ENCODE measurements at regions of chr17 and their contacts with region 1.

Region 1: GRCh38 chr17:7561028-7561575 is 617 bp upstream of the SENP3 start:
- DNase-seq: peak; percentile 76
- ATAC-seq: peak; percentile 72
- H3K4me3 ChIP-seq: peak overlapping the region; percentile 79
- H3K27ac ChIP-seq: peak overlapping the region; percentile 84
- H3K4me1 ChIP-seq: peaks cover 9% of the 10 kb centered on the region
- H3K27me3 ChIP-seq: no peaks in the 10 kb centered on the region
- CTCF ChIP-seq: peak; percentile 94
- POLR2A ChIP-seq: no peak
- RAD21 ChIP-seq: peak; percentile 85

Region 2: DNA sequence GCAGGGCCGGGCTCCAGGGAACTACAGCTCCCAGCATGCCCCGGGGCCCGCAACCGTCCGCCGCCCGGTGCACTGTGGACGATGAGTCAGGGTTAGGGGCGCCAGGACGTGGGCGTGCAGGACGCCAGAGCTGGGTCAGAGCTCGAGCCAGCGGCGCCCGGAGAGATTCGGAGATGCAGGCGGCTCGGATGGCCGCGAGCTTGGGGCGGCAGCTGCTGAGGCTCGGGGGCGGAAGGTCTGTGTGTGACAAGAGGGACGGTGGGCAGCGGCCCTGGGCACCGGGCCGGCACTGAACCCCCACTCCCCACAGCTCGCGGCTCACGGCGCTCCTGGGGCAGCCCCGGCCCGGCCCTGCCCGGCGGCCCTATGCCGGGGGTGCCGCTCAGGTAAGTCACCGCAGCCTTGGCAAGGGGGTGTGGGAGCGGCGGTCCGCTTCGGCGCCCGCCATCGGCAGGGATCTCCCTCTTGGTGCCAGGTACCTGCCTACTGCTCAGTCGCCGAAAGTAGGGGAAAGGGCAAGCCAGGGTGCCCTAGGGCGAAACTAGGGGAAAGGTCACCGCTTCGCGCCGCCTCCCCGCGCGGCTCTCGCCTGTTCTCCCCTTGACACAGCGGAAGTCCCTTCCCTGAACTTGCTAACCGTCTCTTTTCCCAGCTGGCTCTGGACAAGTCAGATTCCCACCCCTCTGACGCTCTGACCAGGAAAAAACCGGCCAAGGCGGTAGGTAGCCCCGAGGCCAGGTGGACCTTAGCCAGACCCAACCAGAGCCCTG is 341.1 kb before region 1 on chr17 and contains the starts of genes ACADVL and DLG4:
- CTCF ChIA-PET with region 1: no interaction called
- POLR2A ChIA-PET with region 1: interaction called, 10 read pairs
- dilution Hi-C with region 1: no loop called
- in situ Hi-C with region 1: no loop called
- intact Hi-C with region 1: no loop called
- DNase-seq: peak; percentile 86
- ATAC-seq: peak; percentile 71
- H3K4me3 ChIP-seq: peak within 1 kb of the TSS; percentile 66
- H3K27ac ChIP-seq: peak within 1 kb of the TSS; percentile 77
- H3K4me1 ChIP-seq: peaks cover 24% of the 10 kb centered on the region
- H3K27me3 ChIP-seq: no peaks in the 10 kb centered on the region
- CTCF ChIP-seq: no peak
- POLR2A ChIP-seq: peak; percentile 95
- RAD21 ChIP-seq: no peak
- total RNA-seq, gene ACADVL: 129 and 139 TPM in 2 replicates
- total RNA-seq, gene DLG4: 8.1 and 8.2 TPM in 2 replicates

Region 3: DNA sequence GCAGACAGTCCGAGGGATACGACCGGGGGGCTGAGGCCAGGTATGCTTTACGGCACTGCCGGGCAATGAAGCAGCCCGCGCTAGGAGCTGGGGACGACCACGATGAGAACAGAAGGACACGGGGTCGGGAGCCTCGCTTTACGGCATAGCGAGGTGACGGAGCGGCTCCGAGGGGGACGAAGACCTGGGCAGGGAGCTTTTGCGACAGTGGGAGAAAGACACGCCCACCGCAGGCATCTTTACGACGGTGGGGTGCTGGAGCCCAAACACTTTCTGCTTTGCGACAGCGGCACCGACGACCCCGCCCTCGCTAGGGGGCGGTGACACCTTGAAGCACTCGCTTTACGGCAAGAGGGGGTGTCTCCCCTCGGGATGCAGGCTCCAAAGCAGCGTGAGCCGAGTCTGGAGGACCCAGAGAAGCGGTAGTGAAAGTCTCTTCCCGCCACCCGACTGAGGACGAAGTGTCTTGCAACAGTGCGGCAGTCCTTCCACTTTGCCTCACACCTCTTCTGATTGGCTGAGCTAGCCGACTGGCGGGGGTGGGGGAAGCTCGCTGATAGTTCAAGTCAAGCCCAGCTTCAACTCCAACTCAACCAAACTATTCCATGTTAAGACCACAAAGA is 231.6 kb before region 1 on chr17:
- CTCF ChIA-PET with region 1: no interaction called
- POLR2A ChIA-PET with region 1: no interaction called
- dilution Hi-C with region 1: no loop called
- in situ Hi-C with region 1: no loop called
- intact Hi-C with region 1: loop called (anchors 10 kb)
- DNase-seq: peak; percentile 99
- ATAC-seq: peak; percentile 83
- H3K4me3 ChIP-seq: peak overlapping the region; percentile 86
- H3K27ac ChIP-seq: peak overlapping the region; percentile 79
- H3K4me1 ChIP-seq: peaks cover 5% of the 10 kb centered on the region; the same call in 1 of the 2 replicates
- H3K27me3 ChIP-seq: peaks cover 2% of the 10 kb centered on the region
- CTCF ChIP-seq: no peak
- POLR2A ChIP-seq: no peak
- RAD21 ChIP-seq: no peak

Region 4: DNA sequence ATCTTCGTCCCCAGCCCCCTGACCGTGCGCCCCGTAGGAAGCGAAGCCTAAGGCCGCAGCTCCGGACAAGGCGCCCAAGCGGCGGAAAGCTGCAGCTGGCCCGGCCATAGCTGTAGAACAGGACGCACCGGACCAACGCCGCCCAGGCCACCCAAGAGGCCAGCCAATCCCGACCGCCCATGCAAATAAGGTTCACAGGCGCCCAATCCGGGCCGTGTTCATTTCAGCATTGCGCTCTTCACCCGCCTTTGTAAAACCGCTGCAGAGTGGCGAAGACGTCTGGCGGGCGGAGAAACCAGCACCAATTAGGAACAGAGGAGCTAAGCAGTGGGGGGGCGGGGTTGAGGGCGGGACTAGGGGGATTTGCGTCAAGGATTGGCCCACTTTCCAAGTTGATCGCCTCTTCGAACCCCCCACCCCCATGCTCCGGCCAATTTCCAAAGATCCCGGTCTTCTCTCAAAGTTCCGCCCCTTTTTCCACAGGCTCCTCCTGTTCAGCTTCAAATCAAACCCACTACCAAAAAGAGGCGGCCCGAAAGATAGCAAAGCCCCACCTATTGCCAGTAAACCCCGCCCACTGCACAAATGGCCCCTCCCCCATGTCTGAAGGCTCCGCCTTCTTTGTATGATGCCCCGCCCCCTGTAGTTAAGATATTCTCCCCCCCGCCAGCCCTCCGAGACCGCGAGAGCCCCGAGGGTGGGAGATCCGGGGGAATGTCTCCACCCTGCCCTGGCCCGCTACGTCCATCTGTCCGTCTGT is 156.9 kb before region 1 on chr17 and contains the start of gene TMEM256:
- CTCF ChIA-PET with region 1: no interaction called
- POLR2A ChIA-PET with region 1: no interaction called
- dilution Hi-C with region 1: no loop called
- in situ Hi-C with region 1: no loop called
- intact Hi-C with region 1: loop called (anchors 1 kb)
- DNase-seq: peak; percentile 99
- ATAC-seq: peak; percentile 80
- H3K4me3 ChIP-seq: peak within 1 kb of the TSS; percentile 94
- H3K27ac ChIP-seq: peak within 1 kb of the TSS; percentile 75
- H3K4me1 ChIP-seq: peaks cover 9% of the 10 kb centered on the region
- H3K27me3 ChIP-seq: no peaks in the 10 kb centered on the region
- CTCF ChIP-seq: no peak
- POLR2A ChIP-seq: peak; percentile 57; the same call in 1 of the 2 replicates
- RAD21 ChIP-seq: no peak
- total RNA-seq, gene TMEM256: 35.3 and 38.4 TPM in 2 replicates

Region 5: DNA sequence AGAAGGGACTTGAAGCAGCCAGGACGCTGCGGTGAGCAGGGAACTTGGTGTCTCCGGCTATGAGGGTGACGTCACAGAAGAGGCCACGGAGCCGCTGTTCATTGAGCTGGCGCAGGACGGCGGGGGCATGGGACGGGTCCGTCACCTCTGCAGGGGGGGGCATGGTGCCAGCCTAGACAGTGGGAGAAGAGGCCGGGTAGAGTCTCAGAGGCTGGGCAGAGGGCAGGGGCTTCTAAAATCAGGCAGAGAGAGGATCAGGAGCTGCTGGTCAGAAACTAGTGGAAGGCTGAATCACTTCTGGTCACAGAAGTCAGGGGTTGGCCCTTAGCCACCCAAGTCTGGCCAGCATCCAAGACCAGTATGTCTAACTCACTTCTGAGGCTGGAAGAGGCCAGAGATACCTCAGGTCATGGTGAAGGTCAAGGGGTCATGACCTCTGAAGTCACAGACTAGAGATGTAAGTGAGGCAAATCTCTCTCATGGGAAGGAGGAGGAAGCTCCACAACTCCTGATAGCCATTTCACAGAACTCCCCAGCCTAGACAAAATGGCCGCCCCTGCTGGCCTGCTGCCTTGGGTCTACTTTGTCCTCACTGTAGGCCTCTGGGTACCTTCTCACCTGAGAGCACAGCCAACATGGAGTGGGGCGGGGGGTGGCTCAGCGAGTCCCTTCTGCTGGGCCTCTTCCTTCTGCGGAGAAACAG is 94.3 kb before region 1 on chr17:
- CTCF ChIA-PET with region 1: no interaction called
- POLR2A ChIA-PET with region 1: interaction called, 19 read pairs
- dilution Hi-C with region 1: no loop called
- in situ Hi-C with region 1: no loop called
- intact Hi-C with region 1: no loop called
- DNase-seq: peak; percentile 66
- ATAC-seq: peak; percentile 58
- H3K4me3 ChIP-seq: no peak overlapping the region
- H3K27ac ChIP-seq: no peak overlapping the region
- H3K4me1 ChIP-seq: peaks cover 12% of the 10 kb centered on the region; the same call in 1 of the 2 replicates
- H3K27me3 ChIP-seq: no peaks in the 10 kb centered on the region
- CTCF ChIP-seq: no peak
- POLR2A ChIP-seq: no peak
- RAD21 ChIP-seq: no peak

Region 6: GRCh38 chr17:7515911-7516610 is 45.0 kb before region 1 on chr17:
- CTCF ChIA-PET with region 1: interaction called, 24 read pairs
- POLR2A ChIA-PET with region 1: no interaction called
- dilution Hi-C with region 1: no loop called
- in situ Hi-C with region 1: no loop called
- intact Hi-C with region 1: loop called (anchors 1 kb)
- DNase-seq: no peak
- ATAC-seq: no peak
- H3K4me3 ChIP-seq: no peak overlapping the region
- H3K27ac ChIP-seq: no peak overlapping the region
- H3K4me1 ChIP-seq: 0 out of 2 replicates have a peak, but pooled peaks cover 1% of the 10 kb centered on the region
- H3K27me3 ChIP-seq: no peaks in the 10 kb centered on the region
- CTCF ChIP-seq: no peak
- POLR2A ChIP-seq: no peak
- RAD21 ChIP-seq: no peak

Measured in IMR-90 (cell line).